ENCODE measurements at regions of chr11 and their contacts with region 1.

Region 1: DNA sequence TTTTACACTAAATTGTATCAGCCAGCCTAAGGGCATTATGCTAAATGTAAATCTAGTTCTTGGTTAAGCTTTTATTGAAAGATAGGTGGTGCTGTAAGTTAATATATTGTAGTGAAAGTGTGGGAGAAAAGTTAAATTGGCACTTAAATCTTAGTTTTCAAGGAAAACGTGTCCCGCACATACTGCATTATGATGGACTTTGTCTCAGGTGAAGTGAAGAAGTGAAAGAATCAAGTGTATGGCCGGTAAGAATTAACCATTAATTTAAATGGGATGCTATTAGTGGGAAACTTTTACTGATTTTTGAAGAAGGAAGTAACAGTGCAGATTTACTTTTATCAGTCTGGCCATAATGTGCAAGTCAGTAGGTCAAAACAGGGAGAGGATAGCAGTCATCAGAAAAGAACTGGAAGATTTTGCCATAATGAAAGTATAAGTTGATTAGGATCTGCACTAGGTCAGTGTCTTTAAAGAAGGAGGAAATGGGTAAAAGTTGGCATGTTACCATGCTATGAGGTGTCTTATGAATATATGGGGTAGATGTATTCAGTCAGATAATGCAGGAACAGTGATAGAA is 81.6 kb downstream of the PDHX start:
- DNase-seq: no peak
- H3K4me3 ChIP-seq: no peak overlapping the region
- H3K27ac ChIP-seq: peak overlapping the region in 1 of 4 donors; percentile 4
- H3K4me1 ChIP-seq: peaks cover 0 to 14% (median 4%) of the 10 kb centered on the region in 4 donors
- H3K27me3 ChIP-seq: no peaks in the 10 kb centered on the region
- CTCF ChIP-seq: peak; percentile 44 to 67 (median 48)
- EP300 ChIP-seq: no peak
- POLR2A ChIP-seq: no peak

Region 2: GRCh38 chr11:35237860-35238715 is 240.0 kb after region 1 on chr11:
- in situ Hi-C with region 1: loop called in 1 of 4 experiments (anchors 10 kb)
- intact Hi-C with region 1: no loop called
- DNase-seq: peak; percentile 54
- H3K4me3 ChIP-seq: no peak overlapping the region
- H3K27ac ChIP-seq: no peak overlapping the region
- H3K4me1 ChIP-seq: peaks cover 0 to 34% (median 2%) of the 10 kb centered on the region in 4 donors
- H3K27me3 ChIP-seq: no peaks in the 10 kb centered on the region
- CTCF ChIP-seq: peak; percentile 65 to 78 (median 75)
- EP300 ChIP-seq: no peak
- POLR2A ChIP-seq: no peak

Region 3: DNA sequence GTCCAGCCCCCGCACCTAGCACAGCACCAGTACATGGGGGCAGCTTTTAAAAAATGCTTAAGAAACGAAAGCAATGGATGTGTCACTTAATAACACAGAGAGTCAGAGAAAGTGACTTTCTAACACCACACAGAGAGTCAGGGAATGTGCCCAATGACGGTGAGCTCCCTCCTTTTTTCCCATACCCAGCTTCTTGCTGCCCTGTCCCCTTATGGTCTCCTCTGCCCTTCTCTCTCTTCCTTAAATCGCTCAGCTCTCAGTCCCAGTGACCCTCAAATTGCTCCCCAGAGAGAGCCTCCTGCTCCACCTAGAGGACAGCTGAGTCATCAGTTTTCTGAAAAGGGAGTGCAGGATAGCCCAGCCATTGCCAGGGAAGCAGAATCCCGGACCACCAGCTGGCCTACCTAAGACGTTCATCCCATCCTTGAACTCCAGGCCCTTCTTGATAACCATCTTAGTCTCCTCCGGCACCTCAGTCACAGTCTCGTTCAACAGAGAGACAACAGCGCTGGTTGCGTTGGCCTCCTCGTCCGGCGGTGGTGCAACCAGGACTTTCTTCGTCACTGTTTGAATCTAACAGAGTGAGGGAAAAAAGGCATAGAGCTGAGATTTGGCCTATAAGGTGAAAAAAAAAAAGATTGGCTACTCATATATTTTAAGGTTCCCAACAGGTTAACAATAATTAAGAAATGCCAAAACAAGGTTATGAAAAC is 307.8 kb after region 1 on chr11:
- in situ Hi-C with region 1: loop called in 1 of 4 experiments (anchors 10 kb)
- intact Hi-C with region 1: loop called (anchors 10 kb)
- DNase-seq: peak; percentile 37
- H3K4me3 ChIP-seq: no peak overlapping the region
- H3K27ac ChIP-seq: no peak overlapping the region
- H3K4me1 ChIP-seq: peaks cover 0 to 21% (median 4%) of the 10 kb centered on the region in 4 donors
- H3K27me3 ChIP-seq: no peaks in the 10 kb centered on the region
- CTCF ChIP-seq: peak; percentile 39 to 57 (median 50)
- EP300 ChIP-seq: no peak
- POLR2A ChIP-seq: no peak

Region 4: GRCh38 chr11:35391922-35392813 is 394.1 kb after region 1 on chr11:
- in situ Hi-C with region 1: loop called in 1 of 4 experiments (anchors 10 kb)
- intact Hi-C with region 1: no loop called
- DNase-seq: peak; percentile 81
- H3K4me3 ChIP-seq: peak overlapping the region in 1 of 4 donors; percentile 24
- H3K27ac ChIP-seq: no peak overlapping the region
- H3K4me1 ChIP-seq: peaks cover 5 to 25% (median 13%) of the 10 kb centered on the region in 4 donors
- H3K27me3 ChIP-seq: no peaks in the 10 kb centered on the region
- CTCF ChIP-seq: peak; percentile 82 to 86 (median 84)
- EP300 ChIP-seq: no peak
- POLR2A ChIP-seq: no peak

Region 5: GRCh38 chr11:35412285-35412684 is 414.2 kb after region 1 on chr11:
- in situ Hi-C with region 1: no loop called
- intact Hi-C with region 1: loop called (anchors 10 kb)
- DNase-seq: no peak
- H3K4me3 ChIP-seq: no peak overlapping the region
- H3K27ac ChIP-seq: no peak overlapping the region
- H3K4me1 ChIP-seq: no peaks in the 10 kb centered on the region
- H3K27me3 ChIP-seq: peaks cover 34% of the 10 kb centered on the region
- CTCF ChIP-seq: no peak
- EP300 ChIP-seq: no peak
- POLR2A ChIP-seq: no peak

Measured in transverse colon (tissue), 4 donors.